ENCODE measurements at regions of chr7 and their contacts with region 1.

Region 1: DNA sequence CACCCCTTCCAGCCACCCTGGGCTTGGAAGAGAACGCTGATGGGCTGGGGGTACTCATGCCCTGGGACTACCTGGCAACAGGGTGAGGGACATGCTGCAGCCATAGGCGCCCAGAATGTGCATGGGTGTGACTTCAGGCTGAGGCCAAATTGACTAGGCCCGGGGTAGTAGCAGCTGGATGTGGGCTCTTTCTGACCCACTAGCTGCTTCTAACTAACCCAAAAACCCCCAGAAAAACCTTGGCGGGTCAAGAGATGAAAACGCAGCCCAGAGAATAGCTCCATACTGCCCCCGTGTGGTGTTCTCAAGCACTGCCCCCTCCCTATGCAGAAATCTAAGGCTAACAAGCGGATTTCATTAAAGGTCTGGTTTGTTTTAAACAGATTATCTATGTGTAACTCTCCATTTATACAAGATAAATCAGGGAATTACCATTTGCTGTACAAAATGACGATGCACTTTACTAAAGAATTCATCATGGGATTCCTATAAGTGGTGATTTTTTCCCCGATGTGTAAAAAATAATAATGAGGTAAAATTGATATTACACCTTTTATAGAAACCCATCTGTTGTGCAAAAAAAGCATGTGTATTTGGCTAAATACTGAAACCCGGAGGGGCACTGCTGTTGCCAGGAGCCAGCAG is 4.2 kb downstream of the SMARCD3 start:
- DNase-seq: peak in 12 of 14 experiments; percentile 30 to 82 (median 46)
- ATAC-seq: peak; percentile 21
- H3K4me3 ChIP-seq: peak overlapping the region; percentile 36
- H3K4me3 Mint-ChIP-seq: peak overlapping the region; percentile 79
- H3K27ac ChIP-seq: no peak overlapping the region
- H3K27ac Mint-ChIP-seq: peak overlapping the region; percentile 63
- H3K4me1 ChIP-seq: peaks cover 52% of the 10 kb centered on the region
- H3K4me1 Mint-ChIP-seq: peaks cover 45% of the 10 kb centered on the region
- H3K27me3 ChIP-seq: peaks cover 32 to 33% of the 10 kb centered on the region in 2 experiments
- H3K27me3 Mint-ChIP-seq: peaks cover 46% of the 10 kb centered on the region
- CTCF ChIP-seq: peak; percentile 77

Region 2: GRCh38 chr7:151123822-151124464 is 120.4 kb before region 1 on chr7:
- CTCF ChIA-PET with region 1: interaction called, 15 read pairs
- POLR2A ChIA-PET with region 1: no interaction called
- intact Hi-C with region 1: loop called (anchors 1 kb)
- DNase-seq: peak; percentile 74 to 91 (median 80)
- ATAC-seq: peak; percentile 99
- H3K4me3 ChIP-seq: no peak overlapping the region
- H3K4me3 Mint-ChIP-seq: peak overlapping the region; percentile 6
- H3K27ac ChIP-seq: no peak overlapping the region
- H3K27ac Mint-ChIP-seq: no peak overlapping the region
- H3K4me1 ChIP-seq: peaks cover 9% of the 10 kb centered on the region
- H3K4me1 Mint-ChIP-seq: peaks cover 6% of the 10 kb centered on the region
- H3K27me3 ChIP-seq: no peaks in the 10 kb centered on the region
- H3K27me3 Mint-ChIP-seq: no peaks in the 10 kb centered on the region
- CTCF ChIP-seq: peak; percentile 94

Region 3: GRCh38 chr7:151172273-151173141 is 71.8 kb before region 1 on chr7:
- CTCF ChIA-PET with region 1: interaction called, 4 read pairs
- POLR2A ChIA-PET with region 1: no interaction called
- intact Hi-C with region 1: loop called (anchors 5 to 10 kb)
- DNase-seq: peak; percentile 58 to 92 (median 75)
- ATAC-seq: peak; percentile 86
- H3K4me3 ChIP-seq: no peak overlapping the region
- H3K4me3 Mint-ChIP-seq: no peak overlapping the region
- H3K27ac ChIP-seq: no peak overlapping the region
- H3K27ac Mint-ChIP-seq: no peak overlapping the region
- H3K4me1 ChIP-seq: peaks cover 23% of the 10 kb centered on the region
- H3K4me1 Mint-ChIP-seq: peaks cover 7% of the 10 kb centered on the region
- H3K27me3 ChIP-seq: peaks cover 18 to 21% of the 10 kb centered on the region in 2 experiments
- H3K27me3 Mint-ChIP-seq: peaks cover 64% of the 10 kb centered on the region
- CTCF ChIP-seq: peak; percentile 100

Region 4: DNA sequence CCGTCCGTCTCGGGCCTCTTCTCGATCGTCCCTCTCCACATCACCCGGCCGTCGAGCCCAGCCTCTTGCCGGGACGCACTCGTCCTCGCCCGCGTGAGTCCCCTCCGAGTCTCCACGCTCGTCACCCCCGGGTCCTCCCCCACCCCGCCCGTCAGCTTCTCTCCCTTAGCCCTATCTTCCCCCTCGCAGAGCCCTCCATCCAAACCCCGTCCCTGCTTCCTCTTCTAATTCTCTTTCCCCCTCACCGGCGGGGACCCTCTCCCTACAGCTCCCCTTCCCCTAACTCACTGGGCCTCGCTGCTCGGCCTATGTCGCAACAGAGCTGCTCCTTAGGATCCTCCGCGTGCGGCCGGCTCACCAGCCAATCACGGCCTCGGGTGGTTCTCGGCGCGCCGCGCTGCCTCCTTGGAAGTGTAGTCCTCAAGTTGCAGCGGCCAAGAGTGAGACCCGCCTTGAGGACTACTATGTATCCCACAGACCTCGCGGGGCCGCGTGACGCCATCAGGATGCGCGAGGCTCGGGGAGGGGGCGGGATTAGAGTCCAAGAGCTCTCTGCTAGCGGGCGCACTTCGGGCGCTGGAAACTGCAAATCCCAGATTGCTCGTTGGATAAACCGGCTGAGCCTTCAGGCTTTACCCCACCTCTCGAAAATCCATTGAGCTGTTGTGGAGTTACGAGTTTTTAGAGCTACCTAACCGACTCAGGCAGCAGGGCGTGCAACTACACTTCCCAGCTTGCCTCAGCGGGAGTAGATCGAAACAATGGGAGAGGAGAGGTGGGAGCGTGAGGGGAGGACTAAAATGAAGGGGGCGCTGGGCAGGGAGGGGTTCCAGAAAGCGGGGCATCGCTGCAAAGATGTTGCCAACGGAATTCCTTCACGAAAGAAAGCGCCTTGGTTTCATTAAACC is 17.2 kb before region 1 on chr7 and contains the start of gene ABCF2:
- CTCF ChIA-PET with region 1: interaction called, 16 read pairs
- POLR2A ChIA-PET with region 1: interaction called, 25 read pairs
- intact Hi-C with region 1: loop called (anchors 2 kb)
- DNase-seq: peak; percentile 93 to 99 (median 97)
- ATAC-seq: peak; percentile 99
- H3K4me3 ChIP-seq: peak within 1 kb of the TSS; percentile 90
- H3K4me3 Mint-ChIP-seq: peak within 1 kb of the TSS; percentile 99
- H3K27ac ChIP-seq: peak within 1 kb of the TSS; percentile 63 to 71
- H3K27ac Mint-ChIP-seq: peak within 1 kb of the TSS; percentile 90
- H3K4me1 ChIP-seq: peaks cover 38% of the 10 kb centered on the region
- H3K4me1 Mint-ChIP-seq: peaks cover 41% of the 10 kb centered on the region
- H3K27me3 ChIP-seq: no peaks in the 10 kb centered on the region
- H3K27me3 Mint-ChIP-seq: no peaks in the 10 kb centered on the region
- CTCF ChIP-seq: no peak
- total RNA-seq, gene ABCF2: 12.3 to 13.2 TPM

Region 5: DNA sequence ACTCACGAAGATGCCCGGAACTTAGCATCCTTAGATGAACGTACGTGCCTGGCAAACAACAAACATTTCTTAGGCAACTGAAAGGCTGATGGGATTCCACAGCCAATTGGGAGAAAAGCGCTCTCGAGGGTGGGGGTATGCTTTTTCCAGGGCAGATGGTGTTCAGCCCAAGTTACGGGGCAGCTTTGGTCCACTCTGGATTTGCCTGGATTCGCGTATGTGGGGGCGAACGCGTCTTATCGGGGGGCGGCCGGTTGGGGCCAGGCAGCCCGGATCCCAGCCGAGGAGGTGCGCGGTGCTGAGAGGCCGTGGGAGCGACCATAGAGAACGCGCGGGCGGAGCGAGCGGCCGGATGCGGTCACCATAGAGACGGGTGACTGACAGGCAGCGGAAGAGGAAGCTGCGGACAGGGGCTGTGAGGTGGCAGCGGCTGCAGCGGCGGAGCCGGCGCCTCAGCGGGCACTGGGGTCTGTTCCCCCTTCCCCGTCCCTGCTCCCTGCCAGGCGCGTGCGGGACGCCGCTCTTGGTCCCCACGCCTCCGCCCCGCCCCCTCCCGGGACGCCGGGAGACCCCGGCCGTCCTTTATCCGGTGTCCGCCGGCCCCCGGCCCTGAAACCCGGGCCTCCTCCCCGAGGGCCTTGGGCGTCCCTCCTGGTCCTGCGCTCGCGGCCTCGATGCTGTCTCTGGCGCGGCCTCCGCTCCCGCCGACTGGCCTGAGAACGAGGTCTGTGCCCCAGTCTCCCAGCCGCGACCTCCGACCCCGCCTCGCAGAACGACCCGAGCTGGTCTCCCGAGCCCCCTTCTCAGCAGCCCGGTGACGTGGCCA is 12.0 kb before region 1 on chr7 and contains the start of gene CHPF2:
- CTCF ChIA-PET with region 1: interaction called, 16 read pairs
- POLR2A ChIA-PET with region 1: interaction called, 25 read pairs
- intact Hi-C with region 1: loop called (anchors 2 kb)
- DNase-seq: peak; percentile 73 to 93 (median 87)
- ATAC-seq: peak; percentile 82
- H3K4me3 ChIP-seq: peak within 1 kb of the TSS; percentile 95
- H3K4me3 Mint-ChIP-seq: peak within 1 kb of the TSS; percentile 99
- H3K27ac ChIP-seq: peak within 1 kb of the TSS; percentile 61 to 74
- H3K27ac Mint-ChIP-seq: peak within 1 kb of the TSS; percentile 90
- H3K4me1 ChIP-seq: peaks cover 48% of the 10 kb centered on the region
- H3K4me1 Mint-ChIP-seq: peaks cover 45% of the 10 kb centered on the region
- H3K27me3 ChIP-seq: no peaks in the 10 kb centered on the region
- H3K27me3 Mint-ChIP-seq: no peaks in the 10 kb centered on the region
- CTCF ChIP-seq: no peak
- total RNA-seq, gene CHPF2: 29.6 to 30.5 TPM

Region 6: DNA sequence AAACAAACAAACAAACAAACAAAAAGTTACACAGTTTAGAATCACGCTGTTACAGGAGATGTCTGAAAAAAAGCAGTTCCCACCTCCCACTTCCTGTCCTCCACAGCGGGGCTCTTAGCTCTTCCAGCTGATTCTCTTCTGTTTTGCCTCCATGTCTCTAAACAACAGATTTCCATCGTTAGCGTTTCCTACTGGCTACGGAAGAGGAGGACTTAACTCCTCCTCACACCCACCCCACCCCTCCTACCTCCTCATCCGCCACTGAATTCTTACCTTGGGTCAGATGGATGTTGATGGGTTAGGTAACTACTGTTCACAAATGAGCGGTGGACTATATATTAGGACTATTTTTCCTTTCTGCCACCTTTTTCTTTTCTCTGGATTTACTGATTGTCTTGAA is 60.5 kb after region 1 on chr7:
- CTCF ChIA-PET with region 1: interaction called, 3 read pairs
- POLR2A ChIA-PET with region 1: no interaction called
- intact Hi-C with region 1: loop called (anchors 1 to 2 kb)
- DNase-seq: peak in 1 of 14 experiments; percentile 6
- ATAC-seq: no peak
- H3K4me3 ChIP-seq: no peak overlapping the region
- H3K4me3 Mint-ChIP-seq: peak overlapping the region; percentile 30
- H3K27ac ChIP-seq: no peak overlapping the region
- H3K27ac Mint-ChIP-seq: no peak overlapping the region
- H3K4me1 ChIP-seq: peaks cover 11% of the 10 kb centered on the region
- H3K4me1 Mint-ChIP-seq: peaks cover 8% of the 10 kb centered on the region
- H3K27me3 ChIP-seq: peaks cover 26 to 37% of the 10 kb centered on the region in 2 experiments
- H3K27me3 Mint-ChIP-seq: peaks cover 43% of the 10 kb centered on the region
- CTCF ChIP-seq: no peak

Region 7: DNA sequence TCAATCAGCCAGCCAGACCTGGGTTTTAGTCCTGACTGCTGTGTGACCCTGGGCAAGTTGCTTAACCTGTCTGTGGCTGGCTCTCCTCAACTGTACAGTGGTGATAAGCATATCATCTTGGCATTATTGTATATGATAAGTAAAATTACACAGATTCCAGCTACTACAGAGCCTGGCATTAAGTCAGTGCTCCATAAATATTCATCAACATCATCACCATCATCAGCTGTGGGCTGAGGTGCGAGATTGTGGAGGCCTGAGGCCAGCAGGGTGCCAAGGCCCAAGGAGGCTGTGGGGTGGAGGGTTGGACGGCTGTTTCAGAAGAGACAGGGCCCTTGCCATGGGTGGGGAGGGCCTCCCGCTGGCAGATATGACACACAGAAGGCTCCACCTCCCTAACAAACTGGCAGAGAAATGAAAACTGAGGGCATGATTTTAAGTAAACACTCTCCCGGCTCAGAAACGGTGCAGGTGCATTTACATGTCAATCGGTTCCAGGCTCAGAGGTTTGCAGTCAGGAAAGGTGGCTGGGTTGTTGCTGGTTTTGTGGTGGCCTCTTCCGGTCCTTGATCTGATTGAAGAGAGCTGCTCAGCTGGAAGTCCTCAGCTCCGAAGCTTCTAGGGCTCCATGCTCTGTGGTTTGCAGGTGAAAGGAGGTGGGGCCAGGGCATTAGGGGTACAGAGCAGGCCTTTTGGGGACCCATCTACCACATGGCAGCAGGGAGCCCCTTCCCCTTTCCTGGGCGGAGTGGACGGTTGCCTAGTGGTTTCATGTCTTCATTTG is 185.4 kb after region 1 on chr7:
- CTCF ChIA-PET with region 1: no interaction called
- POLR2A ChIA-PET with region 1: no interaction called
- intact Hi-C with region 1: no loop called
- DNase-seq: peak; percentile 38 to 91 (median 64)
- ATAC-seq: peak; percentile 83
- H3K4me3 ChIP-seq: no peak overlapping the region
- H3K4me3 Mint-ChIP-seq: peak overlapping the region; percentile 16
- H3K27ac ChIP-seq: peak overlapping the region; percentile 53 to 58
- H3K27ac Mint-ChIP-seq: peak overlapping the region; percentile 85
- H3K4me1 ChIP-seq: peaks cover 78% of the 10 kb centered on the region
- H3K4me1 Mint-ChIP-seq: peaks cover 55% of the 10 kb centered on the region
- H3K27me3 ChIP-seq: no peaks in the 10 kb centered on the region
- H3K27me3 Mint-ChIP-seq: no peaks in the 10 kb centered on the region
- CTCF ChIP-seq: no peak

Measured in CD4-positive, alpha-beta T cell (primary cell).